ENCODE measurements at regions of chr11 and their contacts with region 1.

Region 1: DNA sequence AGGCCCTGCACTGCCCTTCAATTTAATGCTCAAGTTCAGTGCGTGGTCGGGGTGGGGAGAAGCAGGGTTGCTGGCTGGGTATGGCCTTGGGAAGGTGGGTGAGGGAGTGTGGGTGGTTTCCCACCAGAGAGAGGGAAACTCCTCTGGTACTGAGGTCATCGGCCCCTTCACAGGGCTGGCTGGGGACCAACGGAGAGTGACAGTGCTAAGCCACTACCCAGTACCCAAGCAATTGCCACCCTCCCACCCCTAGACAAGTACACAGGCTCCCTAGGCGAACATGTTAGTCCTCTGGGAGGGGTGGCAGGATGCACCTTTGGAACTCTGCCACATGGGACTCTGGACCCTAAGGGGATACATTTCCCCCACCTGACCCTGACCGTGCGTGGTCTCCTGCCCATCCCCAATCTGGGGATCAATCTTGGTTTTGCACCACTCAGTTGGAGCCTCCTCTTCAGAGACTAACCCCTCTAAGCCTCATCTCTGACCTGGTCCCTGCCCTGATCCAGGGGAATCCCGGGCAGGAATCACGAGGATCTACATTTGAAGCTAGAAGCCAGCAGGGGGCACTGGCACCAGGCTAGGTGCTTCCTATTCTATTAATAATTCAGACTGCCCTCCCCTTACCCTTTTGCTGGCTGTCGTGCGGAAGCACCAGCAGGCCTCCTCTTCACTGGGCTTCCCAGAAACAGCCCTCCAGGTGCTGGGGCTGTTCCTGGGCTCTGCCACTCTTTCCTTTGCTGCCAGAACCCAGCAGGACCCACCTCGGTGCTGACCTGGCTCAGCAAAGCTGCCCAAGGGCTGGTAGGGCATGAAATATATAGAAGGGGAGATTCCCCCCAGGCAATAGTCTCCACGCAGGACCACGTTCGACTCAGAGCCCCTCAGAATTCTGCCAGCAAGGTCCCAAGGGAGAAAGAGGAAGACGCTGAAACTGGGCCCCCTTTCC is 377.7 kb downstream of the TENM4 start:
- DNase-seq: peak; percentile 60 to 63
- H3K4me3 ChIP-seq: no peak overlapping the region
- H3K4me3 Mint-ChIP-seq: no peak overlapping the region
- H3K27ac Mint-ChIP-seq: no peak overlapping the region
- H3K4me1 ChIP-seq: no peaks in the 10 kb centered on the region
- H3K4me1 Mint-ChIP-seq: no peaks in the 10 kb centered on the region
- H3K27me3 ChIP-seq: no peaks in the 10 kb centered on the region
- H3K27me3 Mint-ChIP-seq: no peaks in the 10 kb centered on the region
- CTCF ChIP-seq: peak; percentile 72 to 81

Region 2: DNA sequence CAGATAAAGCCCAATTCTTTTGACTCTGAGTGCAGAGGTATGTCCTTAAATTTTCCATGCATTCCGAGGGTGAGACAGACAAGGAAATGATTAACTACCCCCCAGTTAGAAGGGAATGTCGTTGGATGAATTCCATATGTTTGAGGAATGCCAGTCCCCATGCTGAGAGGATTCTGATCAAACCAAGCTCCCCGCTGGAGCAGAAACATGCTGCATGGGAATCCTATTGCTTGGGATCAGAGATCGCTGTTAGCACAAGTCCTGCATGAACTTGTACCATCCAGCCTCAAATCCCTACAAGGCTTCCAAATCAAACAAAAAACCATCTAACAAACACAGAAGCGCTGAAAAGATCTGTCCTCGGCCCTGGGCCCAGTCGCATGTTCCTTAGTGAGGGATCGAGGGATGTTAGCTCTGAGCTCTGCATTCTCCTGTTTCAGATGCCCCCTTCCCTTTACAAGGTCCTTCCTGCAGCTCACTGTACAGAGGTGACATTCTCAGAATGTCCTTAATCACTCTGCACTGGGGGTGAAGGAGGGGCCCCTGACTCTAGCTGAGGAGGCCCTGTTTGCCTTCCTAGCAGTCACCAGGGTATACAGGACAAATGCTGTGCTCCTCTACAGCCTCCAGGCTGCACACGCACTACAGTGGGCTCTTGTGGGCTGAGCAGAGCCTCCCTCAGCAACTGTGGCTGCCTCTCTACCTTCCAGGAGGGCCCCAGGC is 24.3 kb after region 1 on chr11:
- CTCF ChIA-PET with region 1: interaction called, 4 read pairs
- POLR2A ChIA-PET with region 1: no interaction called
- intact Hi-C with region 1: loop called (anchors 1 kb)
- DNase-seq: peak; percentile 72 to 84
- H3K4me3 ChIP-seq: no peak overlapping the region
- H3K4me3 Mint-ChIP-seq: peak overlapping the region; percentile 15
- H3K27ac Mint-ChIP-seq: peak overlapping the region; percentile 89
- H3K4me1 ChIP-seq: peaks cover 40% of the 10 kb centered on the region
- H3K4me1 Mint-ChIP-seq: peaks cover 28% of the 10 kb centered on the region
- H3K27me3 ChIP-seq: no peaks in the 10 kb centered on the region
- H3K27me3 Mint-ChIP-seq: no peaks in the 10 kb centered on the region
- CTCF ChIP-seq: no peak

Region 3: DNA sequence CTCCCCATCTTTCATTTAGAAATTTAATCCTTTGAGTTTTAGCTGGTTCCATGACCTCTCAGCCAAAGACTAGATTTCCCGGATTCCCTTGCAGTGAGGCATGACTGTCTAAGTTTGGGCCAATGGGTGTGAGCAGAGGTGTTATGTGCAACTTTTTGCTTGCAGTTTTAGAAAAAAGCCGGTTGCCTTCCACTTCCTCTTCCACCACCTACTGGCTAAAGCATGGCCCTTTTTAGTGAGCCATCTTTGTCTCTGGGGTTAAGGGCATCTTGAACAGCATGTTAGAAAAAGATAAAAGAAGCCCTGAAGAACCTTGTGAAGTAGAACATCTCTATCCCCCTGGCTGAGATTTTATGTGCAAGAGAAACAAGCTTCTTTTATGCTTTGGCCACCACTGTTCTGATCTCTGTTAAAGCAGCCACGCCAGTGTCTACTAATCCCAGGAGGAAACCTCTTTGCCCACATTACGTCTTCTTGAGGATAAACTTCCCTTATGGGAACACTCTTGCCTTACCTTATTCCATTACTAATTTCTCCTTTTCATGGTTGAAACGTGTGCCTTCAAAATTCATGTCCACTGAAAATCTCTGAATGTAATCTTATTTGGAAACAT is 97.8 kb after region 1 on chr11:
- CTCF ChIA-PET with region 1: interaction called, 6 read pairs
- POLR2A ChIA-PET with region 1: no interaction called
- intact Hi-C with region 1: loop called (anchors 1 kb)
- DNase-seq: peak in 1 of 2 experiments; percentile 43
- H3K4me3 ChIP-seq: no peak overlapping the region
- H3K4me3 Mint-ChIP-seq: no peak overlapping the region
- H3K27ac Mint-ChIP-seq: no peak overlapping the region
- H3K4me1 ChIP-seq: peaks cover 7% of the 10 kb centered on the region
- H3K4me1 Mint-ChIP-seq: peaks cover 12% of the 10 kb centered on the region
- H3K27me3 ChIP-seq: peaks cover 1% of the 10 kb centered on the region; the same call in 1 of the 2 replicates
- H3K27me3 Mint-ChIP-seq: peaks cover 10% of the 10 kb centered on the region
- CTCF ChIP-seq: peak; percentile 57 to 85

Region 4: DNA sequence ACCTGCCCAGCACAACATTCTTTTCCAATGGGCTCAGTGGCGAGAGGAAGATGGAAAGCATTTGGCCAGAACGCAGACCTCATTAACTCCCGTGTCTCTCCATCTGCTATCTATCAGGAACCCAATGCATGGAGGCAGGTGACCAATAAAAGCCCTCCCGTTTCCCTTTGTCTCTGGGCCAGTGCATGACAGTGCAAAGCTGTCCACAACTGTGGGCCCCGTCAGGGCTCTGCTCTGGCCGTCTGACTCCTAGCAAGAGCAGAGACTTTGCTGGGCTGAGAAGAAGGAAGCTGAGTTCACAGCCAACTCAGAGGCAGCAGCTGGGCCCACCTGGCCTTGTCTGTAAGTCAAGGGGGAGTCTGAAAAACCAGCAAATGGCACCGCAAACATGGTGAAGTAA is 199.9 kb after region 1 on chr11:
- CTCF ChIA-PET with region 1: interaction called, 4 read pairs
- POLR2A ChIA-PET with region 1: no interaction called
- intact Hi-C with region 1: loop called (anchors 5 kb)
- DNase-seq: no peak
- H3K4me3 ChIP-seq: no peak overlapping the region
- H3K4me3 Mint-ChIP-seq: no peak overlapping the region
- H3K27ac Mint-ChIP-seq: no peak overlapping the region
- H3K4me1 ChIP-seq: 0 out of 2 replicates have a peak, but pooled peaks cover 4% of the 10 kb centered on the region
- H3K4me1 Mint-ChIP-seq: no peaks in the 10 kb centered on the region
- H3K27me3 ChIP-seq: no peaks in the 10 kb centered on the region
- H3K27me3 Mint-ChIP-seq: peaks cover 9% of the 10 kb centered on the region
- CTCF ChIP-seq: no peak

Measured in Caco-2 (cell line).